Calu3 (cell line): ENCODE measurements at regions of chr1 and their contacts with region 1.

Region 1: GRCh38 chr1:152001391-152002249 is 8.0 kb upstream of the S100A10 start:
- DNase-seq: peak; percentile 91
- H3K4me3 Mint-ChIP-seq: no peak overlapping the region
- H3K27ac Mint-ChIP-seq: peak overlapping the region; percentile 44
- H3K4me1 Mint-ChIP-seq: peaks cover 76% of the 10 kb centered on the region
- H3K27me3 Mint-ChIP-seq: no peaks in the 10 kb centered on the region
- CTCF ChIP-seq: peak; percentile 93

Region 2: DNA sequence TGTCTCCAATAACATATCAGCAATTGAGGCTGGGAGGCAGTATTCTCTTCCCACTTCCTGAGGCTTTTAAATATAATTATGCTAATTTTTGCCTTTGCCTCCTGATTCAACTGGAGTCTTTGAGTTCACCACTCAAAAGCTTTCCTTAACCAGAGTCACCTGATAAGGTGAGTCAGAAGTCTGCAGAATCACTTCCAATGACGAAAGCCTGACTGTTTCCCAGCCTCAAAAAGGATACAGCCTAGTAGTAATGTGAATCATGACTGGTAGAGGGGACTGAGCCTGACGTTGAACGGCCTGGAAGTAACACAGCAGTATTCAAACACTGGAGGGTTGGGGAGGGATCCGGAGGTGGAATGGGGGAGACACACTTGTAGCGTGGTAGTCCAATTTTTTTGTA is 227.9 kb before region 1 on chr1:
- CTCF ChIA-PET with region 1: no interaction called
- intact Hi-C with region 1: no loop called
- DNase-seq: no peak
- H3K4me3 Mint-ChIP-seq: no peak overlapping the region
- H3K27ac Mint-ChIP-seq: peak overlapping the region; percentile 46
- H3K4me1 Mint-ChIP-seq: peaks cover 12% of the 10 kb centered on the region
- H3K27me3 Mint-ChIP-seq: no peaks in the 10 kb centered on the region
- CTCF ChIP-seq: no peak

Region 3: DNA sequence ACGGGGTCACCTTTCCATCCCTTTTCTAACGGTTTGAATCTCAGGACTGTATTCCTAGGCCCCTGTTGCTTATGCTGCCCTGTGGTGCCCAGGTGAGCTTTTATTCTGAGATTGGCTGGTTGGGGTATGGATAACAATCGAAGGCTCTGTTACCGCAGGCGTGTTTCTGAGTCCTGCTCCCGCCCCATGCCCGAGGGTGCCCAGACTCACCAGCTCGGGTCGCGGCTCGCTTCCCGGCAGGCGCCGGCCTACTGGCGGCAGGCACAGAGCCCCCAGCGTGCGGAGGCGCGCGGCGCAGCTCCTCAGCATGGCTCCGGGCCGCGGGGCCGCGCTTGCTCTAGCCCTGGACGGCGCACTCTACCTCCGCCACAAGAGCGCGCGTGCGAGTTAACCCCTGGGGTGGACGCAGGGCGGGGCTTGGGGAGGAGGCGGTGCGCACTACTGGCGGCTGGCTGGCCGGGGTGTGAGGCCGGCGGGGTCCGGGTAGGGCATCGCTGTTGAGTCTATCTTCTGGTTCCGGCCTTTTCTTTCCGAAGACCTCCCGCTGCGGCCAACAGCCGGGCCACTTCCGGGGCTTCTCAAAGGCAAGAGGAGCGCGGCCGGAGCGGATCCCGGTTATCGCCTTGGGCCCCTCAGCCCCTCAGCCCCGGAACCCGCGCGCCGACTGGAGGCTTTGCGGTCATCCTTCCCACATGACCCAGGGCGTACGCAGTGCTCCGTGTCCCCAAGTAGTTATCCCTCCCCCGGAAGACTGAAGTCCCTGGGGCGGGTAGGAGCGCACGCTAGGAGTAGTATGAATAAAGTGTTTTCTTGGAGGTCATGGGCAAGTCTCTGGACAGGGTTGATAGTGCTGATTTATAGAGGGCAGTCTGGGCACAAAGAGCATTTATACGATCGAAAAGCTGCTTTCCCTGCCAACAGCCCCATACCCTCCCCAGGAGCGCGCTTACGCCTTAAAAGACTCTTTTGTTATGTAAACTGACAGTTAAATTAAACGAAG is 92.2 kb before region 1 on chr1 and contains the start of gene THEM4:
- CTCF ChIA-PET with region 1: interaction called, 11 read pairs
- intact Hi-C with region 1: no loop called
- DNase-seq: peak; percentile 100
- H3K4me3 Mint-ChIP-seq: peak within 1 kb of the TSS; percentile 90
- H3K27ac Mint-ChIP-seq: peak within 1 kb of the TSS; percentile 92
- H3K4me1 Mint-ChIP-seq: peaks cover 22% of the 10 kb centered on the region
- H3K27me3 Mint-ChIP-seq: no peaks in the 10 kb centered on the region
- CTCF ChIP-seq: no peak
- total RNA-seq, gene THEM4: 17.2 and 18.6 TPM in 2 replicates

Region 4: DNA sequence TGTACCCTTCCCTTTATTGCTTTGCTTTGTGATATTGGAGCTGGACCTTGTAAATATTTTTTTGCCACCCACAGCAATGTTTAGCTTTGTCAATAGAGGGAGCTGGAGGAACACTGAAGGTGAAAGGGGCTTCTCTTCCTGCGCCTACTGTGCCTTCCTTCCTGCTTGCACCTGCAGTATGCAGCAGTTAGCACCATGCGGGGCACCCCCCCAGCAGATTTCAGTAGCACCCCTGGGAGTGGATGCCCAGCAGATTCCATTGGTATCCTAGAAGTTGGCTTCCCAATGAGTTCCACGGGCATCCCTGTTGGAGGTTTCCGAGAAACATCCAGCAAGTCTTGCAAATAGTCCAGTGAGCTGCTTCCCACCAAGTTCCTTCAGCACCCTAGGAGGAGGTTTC is 33.6 kb before region 1 on chr1:
- CTCF ChIA-PET with region 1: interaction called, 146 read pairs
- intact Hi-C with region 1: loop called (anchors 1 kb)
- DNase-seq: peak; percentile 78
- H3K4me3 Mint-ChIP-seq: no peak overlapping the region
- H3K27ac Mint-ChIP-seq: peak overlapping the region; percentile 1
- H3K4me1 Mint-ChIP-seq: peaks cover 55% of the 10 kb centered on the region
- H3K27me3 Mint-ChIP-seq: no peaks in the 10 kb centered on the region
- CTCF ChIP-seq: peak; percentile 84

Region 5: GRCh38 chr1:152034646-152035405 is 33.2 kb after region 1 on chr1:
- CTCF ChIA-PET with region 1: interaction called, 14 read pairs
- intact Hi-C with region 1: loop called (anchors 2 kb)
- DNase-seq: peak; percentile 85
- H3K4me3 Mint-ChIP-seq: peak overlapping the region; percentile 75
- H3K27ac Mint-ChIP-seq: peak overlapping the region; percentile 90
- H3K4me1 Mint-ChIP-seq: peaks cover 22% of the 10 kb centered on the region
- H3K27me3 Mint-ChIP-seq: no peaks in the 10 kb centered on the region
- CTCF ChIP-seq: peak; percentile 95